Vagina (tissue), 2 donors: ENCODE measurements at regions of chr12 and their contacts with region 1.

Region 1: DNA sequence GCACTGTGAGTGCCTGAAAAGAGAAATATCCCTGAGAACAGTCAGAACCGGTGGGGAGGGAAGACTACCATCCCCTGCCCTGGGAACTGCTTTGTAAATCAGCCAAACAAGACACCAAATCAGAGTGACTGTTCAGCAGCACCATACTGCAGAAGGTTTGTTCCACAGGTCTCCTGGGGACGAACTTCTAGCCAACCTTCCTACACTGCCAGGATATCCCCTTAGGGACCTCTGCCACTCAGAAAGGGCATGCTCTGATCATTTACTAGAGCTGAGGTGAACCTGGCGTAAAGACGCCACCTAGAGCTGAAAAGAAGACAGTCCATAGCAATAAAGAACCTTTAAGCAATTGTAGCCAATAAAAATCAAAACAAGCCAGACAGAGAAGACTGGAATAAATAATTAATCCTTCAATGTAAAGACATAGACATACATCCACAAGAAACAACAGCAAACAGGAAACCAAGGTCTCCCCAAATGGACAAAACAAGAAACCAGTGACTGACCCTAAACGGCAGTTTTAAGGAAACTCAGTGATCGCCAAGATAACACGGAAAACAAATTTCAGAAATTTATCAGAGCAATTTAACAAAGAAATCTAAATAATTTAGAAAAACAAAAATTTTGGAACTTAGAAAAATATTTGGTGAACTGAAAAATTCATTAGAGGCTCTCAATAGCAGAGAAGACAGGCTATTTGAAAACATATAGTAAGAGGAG is 228.1 kb upstream of the AMIGO2 start:
- DNase-seq: no peak
- H3K4me3 ChIP-seq: no peak overlapping the region
- H3K27ac ChIP-seq: no peak overlapping the region
- H3K4me1 ChIP-seq: peaks cover under 1% of the 10 kb centered on the region
- H3K27me3 ChIP-seq: no peaks in the 10 kb centered on the region
- CTCF ChIP-seq: peak in 2 of 3 experiments; percentile 46 to 48
- POLR2A ChIP-seq: no peak

Region 2: DNA sequence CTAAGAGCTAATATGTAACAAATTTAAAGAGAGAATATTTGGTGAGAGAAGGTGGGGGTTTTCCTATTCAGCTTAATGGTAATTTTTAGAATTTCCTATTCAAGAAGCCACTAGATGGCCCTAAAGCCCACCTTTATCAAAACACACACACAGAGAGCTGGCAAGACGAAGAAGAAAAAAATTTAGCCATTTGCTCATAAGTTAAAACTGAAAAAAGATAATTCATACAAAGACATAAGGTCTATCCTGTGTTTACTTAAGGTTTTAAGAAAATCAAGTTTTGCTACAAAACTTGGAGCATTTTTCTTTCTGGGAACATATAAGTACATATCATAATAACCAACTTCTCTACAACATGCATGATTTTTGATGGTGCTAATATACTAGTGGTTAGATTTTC is 275.2 kb before region 1 on chr12:
- intact Hi-C with region 1: loop called (anchors 10 kb)
- DNase-seq: no peak
- H3K4me3 ChIP-seq: no peak overlapping the region
- H3K27ac ChIP-seq: no peak overlapping the region
- H3K4me1 ChIP-seq: peaks cover 6% of the 10 kb centered on the region
- H3K27me3 ChIP-seq: no peaks in the 10 kb centered on the region
- CTCF ChIP-seq: peak in 2 of 3 experiments; percentile 32 to 67
- POLR2A ChIP-seq: no peak